ENCODE measurements at regions of chr9 and their contacts with region 1.

Region 1: GRCh38 chr9:21789541-21790037 is 12.8 kb upstream of the MTAP start:
- DNase-seq: peak; percentile 83
- H3K4me3 ChIP-seq: peak overlapping the region in 2 of 3 experiments; percentile 1 to 30
- H3K27ac ChIP-seq: peak overlapping the region; percentile 30
- H3K4me1 ChIP-seq: peaks cover 6% of the 10 kb centered on the region
- H3K27me3 ChIP-seq: no peaks in the 10 kb centered on the region
- CTCF ChIP-seq: peak; percentile 69 to 85

Region 2: DNA sequence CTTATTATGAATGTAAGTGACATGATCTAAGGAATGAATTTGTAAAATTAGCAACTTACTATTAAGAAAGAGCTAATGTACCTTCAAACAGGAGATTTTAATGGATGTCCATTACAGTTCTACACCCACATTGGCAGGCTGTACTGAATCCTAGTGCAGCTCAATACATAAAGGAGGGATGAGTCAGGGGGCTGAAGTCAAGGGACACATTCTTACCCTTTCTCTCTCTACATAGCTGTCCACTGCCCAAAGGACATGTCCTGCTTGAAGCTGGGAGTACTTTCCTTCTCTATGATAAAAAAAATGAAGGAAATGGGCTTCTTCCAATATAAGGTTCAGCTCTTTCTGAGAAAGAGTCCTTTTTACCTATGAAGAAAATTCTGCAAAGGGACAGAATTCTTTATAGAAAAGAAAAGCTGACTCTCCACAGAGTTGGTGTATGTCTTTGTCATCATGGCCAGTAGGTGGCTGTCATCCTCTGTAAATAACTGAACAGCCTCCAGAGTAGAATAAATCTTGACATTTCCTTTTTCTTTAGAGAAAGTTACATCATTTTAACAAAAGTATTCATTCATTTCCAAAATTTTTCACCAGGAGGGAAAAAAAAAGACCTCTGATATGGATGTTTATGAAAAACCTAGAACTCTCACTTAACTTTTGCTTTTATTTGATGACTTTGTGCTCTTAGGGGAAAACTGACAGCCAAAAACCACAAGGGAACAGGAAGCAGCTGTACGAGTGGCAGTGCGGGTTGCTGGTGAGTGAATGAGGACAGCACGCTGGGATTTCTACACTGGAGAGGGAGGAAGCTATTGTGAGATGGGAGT is 536.7 kb before region 1 on chr9:
- CTCF ChIA-PET with region 1: interaction called, 8 read pairs
- dilution Hi-C with region 1: no loop called
- in situ Hi-C with region 1: loop called in 1 of 2 experiments (anchors 25 kb)
- intact Hi-C with region 1: loop called (anchors 1 kb)
- DNase-seq: peak; percentile 41
- H3K4me3 ChIP-seq: peak overlapping the region in 1 of 3 experiments; percentile 6
- H3K27ac ChIP-seq: no peak overlapping the region
- H3K4me1 ChIP-seq: no peaks in the 10 kb centered on the region
- H3K27me3 ChIP-seq: peaks cover 7% of the 10 kb centered on the region
- CTCF ChIP-seq: peak; percentile 50 to 65

Region 3: DNA sequence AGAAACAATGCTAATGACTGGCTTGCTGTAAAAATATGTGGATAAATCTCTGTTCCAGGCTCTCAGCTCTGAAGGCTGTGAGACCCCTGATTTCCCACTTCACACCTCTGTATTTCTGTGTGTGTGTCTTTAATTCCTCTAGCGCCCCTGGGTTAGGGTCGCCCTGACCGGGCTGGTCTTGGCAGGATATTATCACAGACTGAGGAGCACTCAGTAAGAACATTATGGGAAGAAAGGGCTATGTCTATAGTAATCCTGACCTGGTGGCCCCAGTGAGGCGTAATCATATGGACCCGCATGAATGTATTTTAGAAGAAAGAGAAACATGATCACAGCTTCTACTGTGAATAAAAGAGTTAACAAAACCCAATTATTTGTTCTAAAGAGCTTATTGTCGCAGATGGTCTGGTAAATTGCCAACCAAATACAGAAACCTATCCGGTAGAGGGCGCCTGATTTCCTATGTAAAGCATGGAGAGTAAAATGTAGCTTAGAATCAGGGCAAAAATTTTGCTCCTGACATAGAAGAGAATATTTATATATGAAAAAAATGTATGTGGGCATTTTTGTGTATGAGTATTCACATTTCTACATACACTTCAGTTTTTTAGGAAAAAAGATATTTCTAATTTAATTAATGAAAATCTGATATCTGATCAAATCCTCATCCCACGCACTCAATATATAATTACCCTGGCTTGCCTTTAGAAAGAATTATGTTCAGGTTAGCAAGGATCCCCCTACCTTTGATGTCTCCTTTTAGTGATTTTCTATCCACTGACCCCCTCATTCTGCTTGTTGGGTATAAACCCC is 355.2 kb before region 1 on chr9:
- CTCF ChIA-PET with region 1: interaction called, 3 read pairs
- dilution Hi-C with region 1: no loop called
- in situ Hi-C with region 1: loop called in 1 of 2 experiments (anchors 10 kb)
- intact Hi-C with region 1: no loop called
- DNase-seq: peak; percentile 40
- H3K4me3 ChIP-seq: no peak overlapping the region
- H3K27ac ChIP-seq: no peak overlapping the region
- H3K4me1 ChIP-seq: no peaks in the 10 kb centered on the region
- H3K27me3 ChIP-seq: peaks cover 3% of the 10 kb centered on the region
- CTCF ChIP-seq: peak; percentile 71 to 72

Region 4: DNA sequence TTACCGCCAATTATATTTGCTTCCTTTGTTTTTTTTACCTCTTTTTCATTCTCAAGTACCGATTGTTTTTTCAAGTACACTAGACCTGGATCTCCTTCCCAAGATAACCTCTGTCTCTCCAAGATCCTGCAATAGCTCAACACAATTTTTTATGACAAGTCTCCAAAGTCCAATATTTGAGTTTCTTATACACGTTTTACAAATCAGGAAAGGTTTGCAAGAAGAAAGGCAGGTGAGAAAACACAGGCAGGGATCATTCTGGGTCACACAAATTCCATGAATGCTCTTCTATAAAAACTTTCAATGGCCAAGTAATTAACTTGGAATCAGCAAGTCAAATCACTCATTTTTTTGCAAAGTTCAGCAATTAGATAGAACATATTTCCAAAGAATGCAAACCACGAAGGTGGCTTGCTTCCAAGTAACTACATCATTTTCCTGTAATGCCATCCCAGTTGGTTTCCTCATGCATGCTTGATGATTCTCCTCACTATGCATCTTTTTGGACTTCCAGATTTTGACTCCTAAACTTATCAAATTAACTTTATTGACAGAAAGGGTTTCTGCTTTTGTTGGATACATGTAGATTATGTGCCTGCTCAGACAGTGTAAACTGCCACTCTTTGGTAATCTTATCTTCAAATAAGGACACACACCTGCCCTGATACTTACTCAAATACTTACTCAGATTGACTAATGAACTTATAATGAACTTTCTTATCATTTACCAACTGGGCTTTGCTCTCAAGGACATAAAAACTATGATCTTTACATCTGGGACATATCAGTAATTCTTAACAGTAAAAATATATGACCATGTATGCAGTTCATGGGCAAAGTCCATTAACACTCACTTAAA is 282.7 kb before region 1 on chr9:
- CTCF ChIA-PET with region 1: no interaction called
- dilution Hi-C with region 1: no loop called
- in situ Hi-C with region 1: loop called in 1 of 2 experiments (anchors 25 kb)
- intact Hi-C with region 1: no loop called
- DNase-seq: peak; percentile 76
- H3K4me3 ChIP-seq: no peak overlapping the region
- H3K27ac ChIP-seq: peak overlapping the region; percentile 18
- H3K4me1 ChIP-seq: peaks cover 56% of the 10 kb centered on the region
- H3K27me3 ChIP-seq: no peaks in the 10 kb centered on the region
- CTCF ChIP-seq: no peak

Region 5: DNA sequence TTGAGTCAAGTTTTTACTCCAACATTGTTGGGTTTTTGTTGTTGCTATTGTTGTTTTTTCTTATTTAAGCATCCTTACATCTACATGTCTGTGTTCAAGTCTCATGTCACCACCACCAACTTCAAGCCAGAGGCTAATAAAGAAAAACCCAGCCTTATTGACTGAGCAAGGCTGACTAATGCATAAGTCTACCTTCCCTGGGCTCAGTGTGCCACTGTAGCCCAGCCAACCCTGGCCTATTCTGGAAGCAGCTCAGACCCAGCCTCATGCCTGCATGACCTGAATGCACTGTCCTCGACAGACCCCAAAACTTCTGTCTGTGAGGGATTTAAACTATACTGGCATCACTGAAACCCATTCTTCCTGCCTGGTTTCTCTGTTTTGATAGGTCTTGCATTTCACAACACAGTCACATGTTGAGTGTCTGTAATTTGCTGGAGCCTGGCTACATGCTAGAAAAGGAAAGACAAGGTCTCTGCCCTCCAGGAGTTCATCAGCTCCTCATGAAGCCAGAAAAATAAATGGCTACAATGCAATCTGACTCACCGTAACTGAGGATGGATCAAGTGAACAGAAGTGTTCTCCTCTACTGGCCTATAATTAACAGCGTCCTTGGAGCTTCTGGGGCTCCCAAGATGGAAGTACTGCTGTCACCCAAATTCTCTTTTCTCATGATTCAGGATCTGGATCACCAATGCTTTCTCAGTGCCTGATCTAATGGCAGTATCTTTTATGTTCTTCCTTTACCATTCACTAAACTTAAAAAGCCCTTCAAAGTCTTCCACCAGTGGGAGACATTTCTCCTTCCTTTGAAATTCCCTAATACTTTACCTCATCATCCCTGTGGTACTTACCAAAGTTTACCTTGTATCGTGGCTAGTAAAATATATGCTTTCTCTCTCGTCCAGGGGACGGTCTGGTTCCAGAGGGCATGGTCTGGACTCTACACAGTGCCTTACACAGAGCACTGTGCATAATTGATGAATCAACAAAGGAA is 203.5 kb before region 1 on chr9:
- CTCF ChIA-PET with region 1: no interaction called
- dilution Hi-C with region 1: no loop called
- in situ Hi-C with region 1: no loop called
- intact Hi-C with region 1: loop called (anchors 1 kb)
- DNase-seq: no peak
- H3K4me3 ChIP-seq: no peak overlapping the region
- H3K27ac ChIP-seq: no peak overlapping the region
- H3K4me1 ChIP-seq: peaks cover 17% of the 10 kb centered on the region
- H3K27me3 ChIP-seq: no peaks in the 10 kb centered on the region
- CTCF ChIP-seq: peak; percentile 25 to 47

Region 6: GRCh38 chr9:21682981-21683380 is 106.6 kb before region 1 on chr9:
- CTCF ChIA-PET with region 1: no interaction called
- dilution Hi-C with region 1: loop called (anchors 5 kb)
- in situ Hi-C with region 1: no loop called
- intact Hi-C with region 1: loop called (anchors 1 kb)
- DNase-seq: peak; percentile 92
- H3K4me3 ChIP-seq: no peak overlapping the region
- H3K27ac ChIP-seq: peak overlapping the region; percentile 99
- H3K4me1 ChIP-seq: peaks cover 84% of the 10 kb centered on the region
- H3K27me3 ChIP-seq: no peaks in the 10 kb centered on the region
- CTCF ChIP-seq: no peak

Region 7: DNA sequence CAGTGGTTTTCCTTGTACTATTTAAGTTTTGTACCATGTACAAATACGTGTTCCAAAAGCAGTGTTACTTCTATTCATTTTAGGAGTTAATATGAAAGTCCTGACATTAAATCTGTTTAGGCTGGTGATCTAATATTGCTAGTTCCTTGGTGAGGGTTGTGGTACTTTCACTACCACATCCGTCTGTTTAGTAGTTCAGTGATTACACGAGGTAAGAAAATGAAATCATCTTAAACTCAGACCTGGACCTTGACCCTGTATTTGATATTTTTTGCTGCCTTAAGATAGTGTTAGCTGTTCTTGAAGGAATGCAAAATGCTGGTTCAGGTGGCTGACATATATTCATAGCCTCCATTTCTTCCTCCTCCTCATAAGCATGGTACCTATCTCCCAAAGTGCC is 63.2 kb after region 1 on chr9:
- CTCF ChIA-PET with region 1: no interaction called
- dilution Hi-C with region 1: no loop called
- in situ Hi-C with region 1: no loop called
- intact Hi-C with region 1: no loop called
- DNase-seq: no peak
- H3K4me3 ChIP-seq: no peak overlapping the region
- H3K27ac ChIP-seq: no peak overlapping the region
- H3K4me1 ChIP-seq: peaks cover 22% of the 10 kb centered on the region
- H3K27me3 ChIP-seq: no peaks in the 10 kb centered on the region
- CTCF ChIP-seq: no peak

Measured in mammary epithelial cell (primary cell).